ENCODE measurements at regions of chr11 and their contacts with region 1.

Region 1: GRCh38 chr11:124875943-124876817 is 10.9 kb downstream of the ROBO3 start:
- DNase-seq: peak; percentile 62 to 90 (median 78)
- ATAC-seq: peak; percentile 94
- H3K4me3 Mint-ChIP-seq: peak overlapping the region; percentile 74 to 96 (median 91)
- H3K27ac Mint-ChIP-seq: peak overlapping the region; percentile 53 to 98 (median 96)
- H3K4me1 Mint-ChIP-seq: peaks cover 18 to 44% (median 23%) of the 10 kb centered on the region in 4 donors
- H3K27me3 Mint-ChIP-seq: peaks cover 5 to 43% (median 22%) of the 10 kb centered on the region in 5 donors

Region 2: DNA sequence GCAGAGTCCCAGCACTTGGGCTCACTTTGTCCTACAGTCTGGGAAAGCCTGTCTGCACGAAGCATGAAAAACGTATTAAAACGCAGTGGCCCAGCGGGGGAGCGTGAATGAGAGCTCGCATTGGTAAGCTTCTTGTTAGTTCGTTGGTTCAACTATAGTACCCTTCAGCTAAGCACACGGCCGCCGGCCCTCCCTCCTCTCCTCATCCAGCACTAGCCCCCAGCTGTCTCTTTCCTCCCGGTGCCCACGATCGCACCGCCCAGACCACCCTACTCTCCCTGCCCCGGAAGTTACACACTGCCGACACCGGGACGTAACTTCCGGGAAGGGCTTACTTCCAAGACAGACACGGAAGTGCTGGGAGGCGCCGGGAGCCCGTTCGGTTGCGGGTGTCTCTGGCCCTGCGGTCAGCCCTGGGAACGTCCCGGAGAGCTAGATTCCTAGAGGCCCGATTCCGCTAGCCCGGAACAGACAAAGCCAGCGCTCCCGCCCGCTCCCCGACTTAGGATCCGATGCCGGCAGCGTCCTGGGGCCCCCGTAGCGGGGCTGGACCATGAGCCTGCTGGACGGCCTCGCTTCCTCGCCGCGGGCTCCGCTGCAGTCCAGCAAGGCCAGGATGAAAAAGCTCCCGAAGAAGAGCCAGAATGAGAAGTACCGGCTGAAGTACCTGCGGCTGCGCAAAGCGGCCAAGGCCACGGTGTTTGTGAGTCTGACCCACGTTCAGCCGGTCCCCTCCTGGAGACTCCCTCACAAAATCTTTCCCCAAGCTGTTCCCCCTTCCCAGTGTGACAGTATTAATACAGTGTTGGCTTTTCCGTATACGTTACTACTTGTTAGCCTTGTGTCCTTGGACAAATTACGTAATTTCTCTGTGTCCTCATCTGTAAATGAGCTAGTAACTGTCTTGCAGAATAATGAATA is 253.4 kb before region 1 on chr11 and contains the start of gene TBRG1:
- POLR2A ChIA-PET with region 1: interaction called, 11 read pairs
- DNase-seq: peak; percentile 68 to 93 (median 81)
- ATAC-seq: peak; percentile 97
- H3K4me3 Mint-ChIP-seq: peak within 1 kb of the TSS; percentile 87 to 99 (median 96)
- H3K27ac Mint-ChIP-seq: peak within 1 kb of the TSS; percentile 95 to 99 (median 98)
- H3K4me1 Mint-ChIP-seq: peaks cover 18 to 45% (median 37%) of the 10 kb centered on the region in 4 donors
- H3K27me3 Mint-ChIP-seq: peaks cover 0 to 12% (median 8%) of the 10 kb centered on the region in 5 donors
- polyA plus RNA-seq, gene TBRG1: 34.9 to 37.7 (median 35.8) TPM

Region 3: GRCh38 chr11:124865921-124866583 is 10.1 kb before region 1 on chr11:
- POLR2A ChIA-PET with region 1: interaction called, 18 read pairs
- DNase-seq: peak in 9 of 10 donors; percentile 19 to 70 (median 49)
- ATAC-seq: peak; percentile 64 to 66
- H3K4me3 Mint-ChIP-seq: peak overlapping the region; percentile 2 to 70 (median 47)
- H3K27ac Mint-ChIP-seq: no peak overlapping the region
- H3K4me1 Mint-ChIP-seq: peaks cover 31 to 69% (median 52%) of the 10 kb centered on the region in 4 donors
- H3K27me3 Mint-ChIP-seq: peaks cover 61 to 94% (median 81%) of the 10 kb centered on the region in 5 donors

Region 4: DNA sequence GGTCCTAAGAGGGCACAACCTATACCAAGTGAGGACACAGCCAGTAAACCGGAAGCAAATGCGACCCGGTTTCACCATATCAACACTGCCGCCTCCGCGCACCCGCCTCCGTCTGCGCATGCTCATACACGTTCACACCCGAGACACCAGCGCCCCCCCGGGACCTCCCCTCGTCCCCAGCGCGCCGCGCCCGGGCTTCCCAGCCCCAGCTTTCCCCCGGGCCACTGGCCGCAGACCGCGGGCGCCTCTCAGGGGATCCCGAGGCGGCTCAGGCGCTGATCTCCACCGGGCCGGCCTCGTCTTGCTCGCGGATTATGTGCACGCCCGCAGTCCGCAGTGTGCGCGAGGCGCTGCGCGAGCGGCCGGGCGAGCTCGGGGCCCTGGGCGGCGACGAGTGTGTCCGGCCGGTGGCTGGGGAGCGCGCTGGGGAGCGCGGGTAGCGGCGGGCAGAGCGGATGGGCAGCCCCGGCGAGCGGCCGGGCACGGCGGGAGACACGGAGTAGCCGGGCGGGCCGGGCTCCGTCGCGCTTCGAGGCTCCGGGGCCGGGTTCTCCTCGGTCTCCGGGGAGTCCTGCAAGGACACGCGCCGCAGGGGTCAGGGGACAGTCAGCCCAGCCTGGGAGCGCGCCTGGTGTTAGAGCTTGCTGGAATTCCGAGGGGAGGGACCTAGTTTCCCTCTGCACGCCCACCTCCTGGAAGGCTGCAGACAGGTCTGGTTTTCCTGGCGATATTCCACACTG is 44.9 kb after region 1 on chr11:
- POLR2A ChIA-PET with region 1: interaction called, 11 read pairs
- DNase-seq: peak; percentile 73 to 96 (median 83)
- ATAC-seq: peak; percentile 86 to 92
- H3K4me3 Mint-ChIP-seq: peak overlapping the region; percentile 64 to 88 (median 83)
- H3K27ac Mint-ChIP-seq: peak overlapping the region in 9 of 10 donors; percentile 75 to 92 (median 83)
- H3K4me1 Mint-ChIP-seq: peaks cover 21 to 37% (median 32%) of the 10 kb centered on the region in 4 donors
- H3K27me3 Mint-ChIP-seq: peaks cover 0 to 9% (median 0%) of the 10 kb centered on the region in 5 donors

Measured in naive thymus-derived CD8-positive, alpha-beta T cell (primary cell).